B cell (primary cell): ENCODE measurements at regions of chr10 and their contacts with region 1.

Region 1: DNA sequence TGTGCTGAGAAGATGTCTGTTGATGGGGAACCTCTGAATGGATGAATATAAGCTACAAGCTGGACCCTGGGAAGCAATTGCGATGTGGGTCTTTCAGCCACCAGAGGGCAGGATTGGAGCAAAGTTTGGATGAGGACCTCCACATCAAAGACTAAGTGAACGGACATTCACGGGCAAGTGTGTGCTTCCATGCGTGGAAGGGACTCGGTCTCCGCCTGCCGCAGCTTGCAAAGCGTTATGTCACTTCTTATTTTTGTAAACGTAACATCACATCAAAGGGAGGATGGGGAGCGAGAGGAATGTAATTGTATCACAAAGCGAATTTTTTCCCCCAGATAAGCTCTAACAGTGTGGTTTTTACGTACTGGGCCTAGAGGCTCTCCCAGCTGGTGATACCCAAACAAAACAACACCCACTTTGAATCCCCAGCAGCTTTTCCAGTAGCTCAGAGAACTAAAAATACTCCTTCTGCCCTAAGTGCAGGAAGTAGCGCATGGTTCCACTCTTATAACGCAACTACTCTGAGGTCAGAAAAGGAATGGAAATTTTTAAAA is 65.0 kb downstream of the VWA2 start:
- DNase-seq: peak; percentile 79
- ATAC-seq: peak; percentile 55
- H3K4me3 ChIP-seq: peak overlapping the region; percentile 65 to 86 (median 76)
- H3K4me3 Mint-ChIP-seq: peak overlapping the region; percentile 91
- H3K27ac ChIP-seq: peak overlapping the region; percentile 5 to 53
- H3K27ac Mint-ChIP-seq: peak overlapping the region; percentile 75
- H3K4me1 ChIP-seq: peaks cover 0 to 10% of the 10 kb centered on the region in 2 donors
- H3K4me1 Mint-ChIP-seq: peaks cover 13% of the 10 kb centered on the region
- H3K27me3 ChIP-seq: no peaks in the 10 kb centered on the region
- H3K27me3 Mint-ChIP-seq: no peaks in the 10 kb centered on the region
- CTCF ChIP-seq: peak; percentile 80

Region 2: GRCh38 chr10:114110174-114110972 is 193.7 kb before region 1 on chr10:
- CTCF ChIA-PET with region 1: no interaction called
- POLR2A ChIA-PET with region 1: no interaction called
- intact Hi-C with region 1: no loop called
- DNase-seq: no peak
- ATAC-seq: no peak
- H3K4me3 ChIP-seq: no peak overlapping the region
- H3K4me3 Mint-ChIP-seq: no peak overlapping the region
- H3K27ac ChIP-seq: no peak overlapping the region
- H3K27ac Mint-ChIP-seq: no peak overlapping the region
- H3K4me1 ChIP-seq: peaks cover 9 to 10% of the 10 kb centered on the region in 2 donors
- H3K4me1 Mint-ChIP-seq: peaks cover 13% of the 10 kb centered on the region
- H3K27me3 ChIP-seq: no peaks in the 10 kb centered on the region
- H3K27me3 Mint-ChIP-seq: peaks cover 7% of the 10 kb centered on the region
- CTCF ChIP-seq: no peak

Region 3: DNA sequence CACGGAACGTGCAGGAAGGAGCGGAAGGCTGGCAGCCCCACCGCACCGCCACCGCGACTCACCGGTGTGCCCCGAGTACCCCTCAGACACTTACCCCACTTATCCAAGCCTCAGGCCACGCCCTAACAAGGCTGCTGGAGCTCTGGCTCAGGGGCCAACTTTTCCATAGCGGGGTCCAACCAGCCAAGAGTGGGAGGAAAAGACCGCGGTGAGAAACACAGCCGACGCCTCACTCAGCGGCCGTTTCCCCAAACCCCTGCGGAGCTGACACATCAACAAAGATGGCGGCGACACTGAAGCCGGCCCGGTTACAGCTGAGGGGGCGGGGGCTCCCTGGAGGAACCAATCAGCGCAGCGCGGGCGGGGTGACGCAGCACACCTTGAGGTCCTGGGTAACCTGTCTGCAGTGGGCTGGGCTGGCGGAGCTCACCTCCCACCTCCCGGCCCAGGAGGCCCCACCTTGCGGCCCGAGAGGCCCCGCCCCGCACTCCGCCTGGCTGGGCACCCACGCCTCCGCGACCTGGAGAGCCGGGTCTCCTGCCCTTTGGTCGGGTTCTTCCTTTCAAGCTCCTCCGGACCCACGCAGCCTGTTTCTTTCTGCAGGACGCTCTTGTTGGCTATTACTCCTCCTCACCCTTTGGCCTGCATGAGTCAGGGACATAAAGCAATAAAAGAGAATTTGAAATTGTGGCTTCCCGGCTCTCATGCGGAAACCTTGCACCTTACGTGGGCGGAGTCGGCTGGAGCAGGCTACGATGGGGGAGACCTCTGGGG is 130.0 kb before region 1 on chr10 and contains the start of gene CCDC186:
- CTCF ChIA-PET with region 1: interaction called, 4 read pairs
- POLR2A ChIA-PET with region 1: interaction called, 6 read pairs
- intact Hi-C with region 1: loop called (anchors 1 kb)
- DNase-seq: peak; percentile 98
- ATAC-seq: peak; percentile 98
- H3K4me3 ChIP-seq: peak within 1 kb of the TSS; percentile 85 to 95 (median 88)
- H3K4me3 Mint-ChIP-seq: peak within 1 kb of the TSS; percentile 89
- H3K27ac ChIP-seq: peak within 1 kb of the TSS; percentile 81 to 84
- H3K27ac Mint-ChIP-seq: peak within 1 kb of the TSS; percentile 96
- H3K4me1 ChIP-seq: peaks cover 11 to 13% of the 10 kb centered on the region in 2 donors
- H3K4me1 Mint-ChIP-seq: peaks cover 34% of the 10 kb centered on the region
- H3K27me3 ChIP-seq: no peaks in the 10 kb centered on the region
- H3K27me3 Mint-ChIP-seq: peaks cover 3% of the 10 kb centered on the region
- CTCF ChIP-seq: no peak
- total RNA-seq, gene CCDC186: 31.5 and 33.8 TPM in 2 replicates

Region 4: DNA sequence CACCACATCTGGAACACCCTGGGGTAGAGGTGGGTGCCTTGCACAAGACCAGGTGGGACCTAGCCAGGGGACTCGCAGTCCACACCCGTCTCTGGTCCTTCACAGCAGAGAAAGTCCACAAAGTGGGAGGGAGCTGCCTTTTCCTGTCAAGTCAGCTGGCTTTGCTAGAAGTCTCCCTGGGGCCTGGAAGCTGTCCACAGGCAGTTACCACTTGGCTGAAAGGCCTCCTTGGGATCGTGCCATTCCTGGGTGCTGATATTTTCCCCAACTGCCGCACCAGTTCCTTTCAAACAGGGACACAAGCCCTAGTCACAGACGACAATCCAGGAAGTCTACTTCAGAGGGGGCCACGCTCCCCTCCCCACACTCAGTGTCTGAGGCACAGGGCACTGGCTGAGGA is 24.8 kb after region 1 on chr10:
- CTCF ChIA-PET with region 1: interaction called, 14 read pairs
- POLR2A ChIA-PET with region 1: no interaction called
- intact Hi-C with region 1: no loop called
- DNase-seq: no peak
- ATAC-seq: no peak
- H3K4me3 ChIP-seq: no peak overlapping the region
- H3K4me3 Mint-ChIP-seq: no peak overlapping the region
- H3K27ac ChIP-seq: no peak overlapping the region
- H3K27ac Mint-ChIP-seq: no peak overlapping the region
- H3K4me1 ChIP-seq: no peaks in the 10 kb centered on the region
- H3K4me1 Mint-ChIP-seq: no peaks in the 10 kb centered on the region
- H3K27me3 ChIP-seq: no peaks in the 10 kb centered on the region
- H3K27me3 Mint-ChIP-seq: peaks cover 3% of the 10 kb centered on the region
- CTCF ChIP-seq: no peak

Region 5: GRCh38 chr10:114526504-114527238 is 222.6 kb after region 1 on chr10:
- CTCF ChIA-PET with region 1: interaction called, 6 read pairs
- POLR2A ChIA-PET with region 1: interaction called, 3 read pairs
- intact Hi-C with region 1: loop called (anchors 1 kb)
- DNase-seq: peak; percentile 96
- ATAC-seq: peak; percentile 96
- H3K4me3 ChIP-seq: peak overlapping the region; percentile 64 to 84 (median 79)
- H3K4me3 Mint-ChIP-seq: peak overlapping the region; percentile 95
- H3K27ac ChIP-seq: peak overlapping the region; percentile 79 to 96
- H3K27ac Mint-ChIP-seq: peak overlapping the region; percentile 99
- H3K4me1 ChIP-seq: peaks cover 42 to 51% of the 10 kb centered on the region in 2 donors
- H3K4me1 Mint-ChIP-seq: peaks cover 59% of the 10 kb centered on the region
- H3K27me3 ChIP-seq: no peaks in the 10 kb centered on the region
- H3K27me3 Mint-ChIP-seq: no peaks in the 10 kb centered on the region
- CTCF ChIP-seq: no peak

Region 6: DNA sequence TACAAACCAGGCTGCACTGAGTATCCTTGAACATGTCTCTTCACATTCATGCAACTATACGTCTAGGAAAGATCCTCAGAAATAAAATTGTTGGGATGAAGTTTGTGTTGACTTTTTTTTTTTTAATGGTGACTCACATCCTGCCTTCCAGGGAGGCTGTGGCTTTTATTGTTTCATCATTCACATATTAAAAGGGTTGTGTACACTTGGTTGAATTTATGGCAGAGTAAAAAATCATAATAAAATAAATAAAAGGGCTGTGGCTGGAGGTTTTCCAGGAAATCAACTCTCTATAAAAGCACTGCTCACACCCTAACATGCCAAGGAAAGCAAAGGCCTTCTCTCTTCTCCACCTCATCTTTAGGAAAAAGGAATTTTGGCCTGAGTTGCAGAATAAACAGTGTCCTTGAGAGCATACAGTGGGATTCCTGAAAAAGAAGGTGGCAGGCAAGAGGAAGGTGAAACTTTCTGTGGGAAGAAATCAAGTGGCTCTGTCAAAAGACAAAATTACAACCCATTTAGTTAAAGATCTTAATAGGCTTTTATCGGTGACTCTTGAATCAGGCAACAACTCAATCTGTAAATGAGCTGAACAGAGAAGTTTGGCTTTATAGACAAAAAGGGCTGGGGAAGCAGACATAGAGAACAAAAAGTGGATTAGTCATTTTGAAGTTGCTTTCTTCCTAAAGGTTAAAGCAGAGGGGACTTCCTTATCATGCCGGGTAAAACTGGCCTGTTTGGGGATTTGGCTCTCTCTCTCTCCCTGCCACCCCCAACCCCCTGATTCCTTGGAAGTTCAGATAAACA is 475.9 kb after region 1 on chr10:
- CTCF ChIA-PET with region 1: interaction called, 82 read pairs
- POLR2A ChIA-PET with region 1: no interaction called
- intact Hi-C with region 1: no loop called
- DNase-seq: no peak
- ATAC-seq: no peak
- H3K4me3 ChIP-seq: no peak overlapping the region
- H3K4me3 Mint-ChIP-seq: no peak overlapping the region
- H3K27ac ChIP-seq: no peak overlapping the region
- H3K27ac Mint-ChIP-seq: no peak overlapping the region
- H3K4me1 ChIP-seq: no peaks in the 10 kb centered on the region
- H3K4me1 Mint-ChIP-seq: no peaks in the 10 kb centered on the region
- H3K27me3 ChIP-seq: peaks cover 0 to 4% (median 0%) of the 10 kb centered on the region in 4 experiments
- H3K27me3 Mint-ChIP-seq: peaks cover 5% of the 10 kb centered on the region
- CTCF ChIP-seq: no peak

Region 7: GRCh38 chr10:115129752-115130151 is 825.7 kb after region 1 on chr10:
- CTCF ChIA-PET with region 1: interaction called, 27 read pairs
- POLR2A ChIA-PET with region 1: no interaction called
- intact Hi-C with region 1: no loop called
- DNase-seq: peak; percentile 38
- ATAC-seq: no peak
- H3K4me3 ChIP-seq: no peak overlapping the region
- H3K4me3 Mint-ChIP-seq: no peak overlapping the region
- H3K27ac ChIP-seq: no peak overlapping the region
- H3K27ac Mint-ChIP-seq: no peak overlapping the region
- H3K4me1 ChIP-seq: no peaks in the 10 kb centered on the region
- H3K4me1 Mint-ChIP-seq: no peaks in the 10 kb centered on the region
- H3K27me3 ChIP-seq: no peaks in the 10 kb centered on the region
- H3K27me3 Mint-ChIP-seq: peaks cover 7% of the 10 kb centered on the region
- CTCF ChIP-seq: peak; percentile 63